ENCODE measurements at regions of chr5 and their contacts with region 1.

Region 1: GRCh38 chr5:90409318-90410177 is at the start of gene CETN3:
- DNase-seq: peak; percentile 96
- H3K4me3 ChIP-seq: peak within 1 kb of the TSS; percentile 82 to 95 (median 83)
- H3K27ac ChIP-seq: peak within 1 kb of the TSS; percentile 94
- H3K4me1 ChIP-seq: peaks cover 15% of the 10 kb centered on the region
- H3K27me3 ChIP-seq: no peaks in the 10 kb centered on the region
- CTCF ChIP-seq: no peak
- POLR2A ChIP-seq: peak; percentile 94
- total RNA-seq, gene CETN3: 15.5 and 17.3 TPM in 2 replicates

Region 2: DNA sequence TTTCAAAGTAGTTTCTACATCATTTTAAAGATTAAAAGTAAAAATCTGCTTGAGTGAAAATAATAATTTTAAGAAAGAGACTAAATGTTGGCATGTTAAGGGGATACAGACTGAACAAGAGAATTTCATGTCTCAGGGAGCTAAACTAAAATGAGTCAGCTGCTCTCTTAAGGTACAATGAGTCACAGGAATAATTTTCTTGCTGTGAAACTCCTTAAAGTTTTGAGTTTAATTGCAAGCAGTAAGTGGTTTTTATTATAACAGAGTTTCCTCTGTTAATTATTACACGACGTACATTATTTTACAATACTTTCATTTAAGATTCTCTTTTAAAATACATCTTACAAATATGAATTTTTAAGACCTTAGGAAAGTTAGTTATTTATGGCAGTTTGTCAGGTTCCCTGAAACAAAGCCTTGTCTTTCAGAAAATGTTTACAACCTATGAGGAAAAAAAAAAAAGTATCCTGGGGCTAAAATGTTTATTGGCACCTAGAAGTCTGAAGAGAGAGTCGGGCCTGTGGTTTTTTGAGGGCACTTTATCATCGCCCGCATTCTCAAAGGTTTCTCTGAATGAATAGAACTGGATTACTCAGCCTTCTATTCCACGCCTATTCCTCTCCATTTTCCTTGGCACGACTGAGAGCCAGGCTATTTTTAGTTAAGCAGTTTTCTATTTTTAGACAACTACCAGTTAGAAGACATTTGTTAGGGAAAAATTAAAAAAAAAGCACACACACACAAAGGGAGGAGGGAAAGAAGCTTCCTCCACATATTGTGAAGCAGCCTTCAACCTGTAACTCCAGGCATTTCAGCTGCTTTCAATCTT is 1623.9 kb before region 1 on chr5:
- CTCF ChIA-PET with region 1: no interaction called
- POLR2A ChIA-PET with region 1: no interaction called
- dilution Hi-C with region 1: no loop called
- intact Hi-C with region 1: loop called (anchors 10 kb)
- DNase-seq: peak; percentile 96
- H3K4me3 ChIP-seq: peak overlapping the region in 1 of 3 experiments; percentile 46
- H3K27ac ChIP-seq: peak overlapping the region; percentile 97
- H3K4me1 ChIP-seq: peaks cover 33% of the 10 kb centered on the region
- H3K27me3 ChIP-seq: no peaks in the 10 kb centered on the region
- CTCF ChIP-seq: no peak
- POLR2A ChIP-seq: no peak

Region 3: GRCh38 chr5:88889189-88890069 is 1520.1 kb before region 1 on chr5:
- CTCF ChIA-PET with region 1: no interaction called
- POLR2A ChIA-PET with region 1: interaction called, 3 read pairs
- dilution Hi-C with region 1: no loop called
- intact Hi-C with region 1: loop called (anchors 5 kb)
- DNase-seq: peak; percentile 66
- H3K4me3 ChIP-seq: peak overlapping the region; percentile 47 to 64 (median 52)
- H3K27ac ChIP-seq: peak overlapping the region; percentile 33
- H3K4me1 ChIP-seq: peaks cover 13% of the 10 kb centered on the region
- H3K27me3 ChIP-seq: no peaks in the 10 kb centered on the region
- CTCF ChIP-seq: no peak
- POLR2A ChIP-seq: no peak

Region 4: GRCh38 chr5:89930591-89931392 is 478.8 kb before region 1 on chr5:
- CTCF ChIA-PET with region 1: no interaction called
- POLR2A ChIA-PET with region 1: no interaction called
- dilution Hi-C with region 1: no loop called
- intact Hi-C with region 1: loop called (anchors 2 kb)
- DNase-seq: peak; percentile 88
- H3K4me3 ChIP-seq: peak overlapping the region in 1 of 3 experiments; percentile 21
- H3K27ac ChIP-seq: peak overlapping the region; percentile 97
- H3K4me1 ChIP-seq: peaks cover 29% of the 10 kb centered on the region
- H3K27me3 ChIP-seq: no peaks in the 10 kb centered on the region
- CTCF ChIP-seq: no peak
- POLR2A ChIP-seq: no peak

Region 5: GRCh38 chr5:90020575-90021539 is 388.7 kb before region 1 on chr5:
- CTCF ChIA-PET with region 1: no interaction called
- POLR2A ChIA-PET with region 1: no interaction called
- dilution Hi-C with region 1: no loop called
- intact Hi-C with region 1: loop called (anchors 5 kb)
- DNase-seq: peak; percentile 88
- H3K4me3 ChIP-seq: peak overlapping the region; percentile 36 to 68 (median 36)
- H3K27ac ChIP-seq: peak overlapping the region; percentile 93
- H3K4me1 ChIP-seq: peaks cover 6% of the 10 kb centered on the region
- H3K27me3 ChIP-seq: no peaks in the 10 kb centered on the region
- CTCF ChIP-seq: no peak
- POLR2A ChIP-seq: no peak

Region 6: DNA sequence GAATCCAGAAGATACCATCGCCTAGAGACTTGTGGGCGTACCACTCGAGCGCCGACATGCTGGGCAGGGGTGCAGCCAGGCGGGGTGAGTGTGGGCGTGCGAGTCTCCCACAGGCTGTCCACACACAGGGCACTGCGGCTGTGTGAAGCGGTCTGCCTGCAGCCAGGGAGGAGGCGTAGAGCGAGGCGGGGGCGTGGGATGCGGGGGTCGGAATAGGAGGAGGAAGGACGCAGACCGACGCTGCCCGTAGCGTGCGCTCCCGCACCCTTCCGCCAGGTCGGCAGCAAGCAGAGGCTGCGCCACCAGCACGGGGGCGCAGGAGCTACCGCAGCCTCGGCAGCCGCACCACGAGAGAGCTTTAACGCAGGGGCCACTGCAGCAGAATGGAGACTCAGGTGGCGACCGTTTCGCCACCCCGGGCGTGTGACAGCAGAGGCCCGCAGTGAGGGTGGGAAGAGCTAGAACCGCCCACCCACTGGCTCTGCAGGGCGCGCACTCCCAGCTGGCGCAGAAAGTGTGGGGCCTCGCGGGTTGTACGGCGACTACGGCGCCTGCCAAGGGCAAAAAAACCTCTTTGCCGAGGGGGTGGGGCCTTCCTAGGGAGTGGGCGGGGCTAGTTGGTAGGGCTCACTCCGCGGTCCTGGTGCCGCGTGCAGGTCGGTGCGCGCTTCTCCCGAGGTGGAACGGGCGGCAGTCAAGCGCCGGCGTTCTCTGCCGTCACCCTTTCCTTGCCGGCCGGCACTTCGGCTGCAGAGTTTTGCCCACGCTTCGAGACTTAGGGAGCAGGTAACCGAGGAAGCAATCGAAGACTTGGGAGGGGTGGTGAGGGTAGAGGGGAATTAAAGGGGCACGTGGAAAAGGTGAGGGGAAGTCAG is 64.9 kb after region 1 on chr5 and contains the starts of genes MBLAC2 and POLR3G:
- CTCF ChIA-PET with region 1: interaction called, 8 read pairs
- POLR2A ChIA-PET with region 1: interaction called, 3 read pairs
- dilution Hi-C with region 1: no loop called
- intact Hi-C with region 1: loop called (anchors 1 kb)
- DNase-seq: peak; percentile 94
- H3K4me3 ChIP-seq: peak within 1 kb of the TSS; percentile 48 to 88 (median 64)
- H3K27ac ChIP-seq: no peak within 1 kb of the TSS
- H3K4me1 ChIP-seq: peaks cover 15% of the 10 kb centered on the region
- H3K27me3 ChIP-seq: no peaks in the 10 kb centered on the region
- CTCF ChIP-seq: peak; percentile 25 to 66
- POLR2A ChIP-seq: peak; percentile 82
- total RNA-seq, gene MBLAC2: 4.8 and 5.3 TPM in 2 replicates
- total RNA-seq, gene POLR3G: 15.0 and 16.7 TPM in 2 replicates

Measured in endothelial cell of umbilical vein (primary cell).